Right lobe of liver (tissue), 6 donors: ENCODE measurements at regions of chr4 and their contacts with region 1.

Region 1: DNA sequence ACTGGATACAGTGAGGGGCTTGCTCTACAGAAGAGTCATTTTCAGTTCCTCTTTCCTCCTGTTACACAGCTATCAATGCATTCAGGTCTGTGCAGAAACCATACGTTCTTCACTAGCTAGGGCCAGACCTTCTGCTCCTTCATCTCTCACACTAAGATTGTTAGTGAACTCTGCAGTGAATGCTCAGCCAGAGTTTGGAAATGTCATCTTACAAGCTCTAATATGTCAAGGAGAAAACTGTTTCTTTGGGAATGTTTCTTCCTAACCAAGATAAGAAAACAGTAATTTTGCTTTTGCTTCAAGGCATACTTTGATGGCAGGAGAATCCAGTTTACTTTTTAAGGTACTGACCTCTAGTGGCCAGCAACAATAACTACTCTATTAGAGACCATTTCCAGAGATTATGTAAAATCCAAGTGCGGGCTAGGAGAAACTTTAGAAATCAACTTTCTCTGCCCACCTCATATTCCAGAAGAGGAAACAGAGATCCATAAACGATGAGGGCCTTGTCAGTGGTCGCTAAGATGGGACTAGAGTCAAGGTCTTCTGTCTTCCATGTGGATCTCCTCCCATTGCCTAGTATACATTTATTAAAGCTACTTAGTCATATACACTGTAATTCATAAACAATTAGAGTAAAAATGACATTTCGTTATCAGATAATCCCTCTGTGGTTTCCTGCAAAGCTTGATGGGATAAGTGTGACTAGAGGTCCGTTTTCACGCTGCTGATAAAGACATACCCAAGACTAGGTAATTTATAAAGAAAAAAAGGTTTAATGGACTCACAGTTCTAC is 12.1 kb upstream of the CC2D2A start:
- DNase-seq: no peak
- ATAC-seq: peak; percentile 76 to 84 (median 80)
- H3K4me3 ChIP-seq: no peak overlapping the region
- H3K27ac ChIP-seq: no peak overlapping the region
- H3K4me1 ChIP-seq: peaks cover 0 to 11% (median 3%) of the 10 kb centered on the region in 4 donors
- H3K27me3 ChIP-seq: no peaks in the 10 kb centered on the region
- CTCF ChIP-seq: peak; percentile 71 to 76 (median 74)
- POLR2A ChIP-seq: no peak

Region 2: DNA sequence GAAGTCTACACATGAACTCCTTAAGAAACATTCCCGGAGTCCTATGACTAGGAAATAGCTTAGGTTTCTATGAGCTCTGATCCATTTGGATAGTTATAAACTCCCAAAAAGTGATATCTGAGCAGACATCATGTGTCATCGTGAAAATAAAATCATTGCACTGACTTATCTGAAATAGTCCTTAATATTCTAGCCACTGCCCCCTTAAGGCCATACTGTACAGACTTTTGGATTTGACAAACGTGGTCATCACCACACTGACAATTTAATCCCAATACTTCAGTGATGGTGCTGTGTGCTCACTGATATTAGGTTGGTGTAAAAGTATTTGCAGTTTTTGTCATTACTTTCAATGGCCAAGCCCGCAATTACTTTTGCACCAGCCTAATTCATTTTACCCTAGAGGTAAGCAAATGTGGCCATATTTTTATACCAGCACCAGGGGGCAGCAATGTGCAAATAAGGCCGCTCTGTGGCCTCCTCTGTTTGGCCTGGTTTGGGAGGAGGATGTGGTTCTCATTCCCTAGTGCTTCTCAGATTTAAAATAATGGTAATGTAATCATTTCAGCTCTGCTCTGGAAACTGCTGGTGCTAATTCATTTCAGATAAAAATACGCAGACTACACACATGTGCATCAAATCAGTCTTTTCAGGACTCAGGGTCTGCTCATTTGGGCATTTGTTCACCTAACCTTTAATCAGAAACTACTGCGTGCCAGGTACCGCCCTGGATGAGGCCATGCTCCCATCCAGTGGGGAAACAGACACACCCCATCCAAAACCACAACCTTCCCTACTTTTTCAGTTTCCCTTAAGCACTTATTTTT is 226.1 kb before region 1 on chr4:
- intact Hi-C with region 1: loop called (anchors 5 to 10 kb)
- DNase-seq: peak; percentile 60 to 82 (median 62)
- ATAC-seq: peak; percentile 94 to 98 (median 96)
- H3K4me3 ChIP-seq: no peak overlapping the region
- H3K27ac ChIP-seq: no peak overlapping the region
- H3K4me1 ChIP-seq: no peaks in the 10 kb centered on the region
- H3K27me3 ChIP-seq: no peaks in the 10 kb centered on the region
- CTCF ChIP-seq: peak; percentile 65 to 82 (median 76)
- POLR2A ChIP-seq: no peak

Region 3: GRCh38 chr4:15238720-15239119 is 218.9 kb before region 1 on chr4:
- intact Hi-C with region 1: loop called (anchors 5 to 10 kb)
- DNase-seq: no peak
- ATAC-seq: peak; percentile 83 to 93 (median 88)
- H3K4me3 ChIP-seq: no peak overlapping the region
- H3K27ac ChIP-seq: no peak overlapping the region
- H3K4me1 ChIP-seq: no peaks in the 10 kb centered on the region
- H3K27me3 ChIP-seq: no peaks in the 10 kb centered on the region
- CTCF ChIP-seq: peak; percentile 48 to 64 (median 57)
- POLR2A ChIP-seq: no peak